Activated CD4-positive, alpha-beta memory T cell treated with anti-CD3 and anti-CD28 coated beads for 36 hours (primary cell): ENCODE measurements at regions of chr6 and their contacts with region 1.

Region 1: DNA sequence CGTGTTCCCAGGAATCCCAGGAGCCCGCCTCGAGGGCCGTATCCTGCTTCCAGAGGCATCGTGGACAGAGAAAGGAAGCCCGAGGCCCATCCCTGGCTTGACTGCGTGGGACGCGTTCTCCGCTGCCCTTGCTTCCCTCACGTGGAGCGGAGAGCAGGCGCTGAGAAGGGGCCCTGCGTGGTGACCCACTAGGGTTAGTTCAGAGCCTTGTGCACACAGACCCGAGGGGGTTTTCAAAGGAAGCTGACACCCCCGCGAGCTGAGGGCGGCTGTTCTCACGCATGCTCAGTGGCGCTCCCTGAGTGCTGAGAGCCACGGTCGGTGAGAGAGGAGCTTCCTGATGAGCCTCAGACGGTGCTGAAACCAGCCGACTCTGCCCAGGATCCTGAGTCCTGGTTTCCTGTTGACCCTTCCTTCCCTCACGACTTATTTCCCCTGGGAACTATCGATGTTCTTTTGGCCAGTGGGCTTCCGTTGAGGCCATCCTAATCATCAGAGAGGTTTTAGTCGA is 28.9 kb upstream of the CCR6 start:
- DNase-seq: peak; percentile 82
- H3K4me3 Mint-ChIP-seq: peak overlapping the region; percentile 55
- H3K27ac Mint-ChIP-seq: peak overlapping the region; percentile 67
- H3K4me1 Mint-ChIP-seq: peaks cover 67% of the 10 kb centered on the region
- H3K27me3 Mint-ChIP-seq: no peaks in the 10 kb centered on the region

Region 2: GRCh38 chr6:166929542-166930189 is 164.3 kb before region 1 on chr6:
- CTCF ChIA-PET with region 1: no interaction called
- POLR2A ChIA-PET with region 1: no interaction called
- intact Hi-C with region 1: no loop called
- DNase-seq: peak; percentile 18
- H3K4me3 Mint-ChIP-seq: no peak overlapping the region
- H3K27ac Mint-ChIP-seq: no peak overlapping the region
- H3K4me1 Mint-ChIP-seq: peaks cover 15% of the 10 kb centered on the region
- H3K27me3 Mint-ChIP-seq: no peaks in the 10 kb centered on the region

Region 3: DNA sequence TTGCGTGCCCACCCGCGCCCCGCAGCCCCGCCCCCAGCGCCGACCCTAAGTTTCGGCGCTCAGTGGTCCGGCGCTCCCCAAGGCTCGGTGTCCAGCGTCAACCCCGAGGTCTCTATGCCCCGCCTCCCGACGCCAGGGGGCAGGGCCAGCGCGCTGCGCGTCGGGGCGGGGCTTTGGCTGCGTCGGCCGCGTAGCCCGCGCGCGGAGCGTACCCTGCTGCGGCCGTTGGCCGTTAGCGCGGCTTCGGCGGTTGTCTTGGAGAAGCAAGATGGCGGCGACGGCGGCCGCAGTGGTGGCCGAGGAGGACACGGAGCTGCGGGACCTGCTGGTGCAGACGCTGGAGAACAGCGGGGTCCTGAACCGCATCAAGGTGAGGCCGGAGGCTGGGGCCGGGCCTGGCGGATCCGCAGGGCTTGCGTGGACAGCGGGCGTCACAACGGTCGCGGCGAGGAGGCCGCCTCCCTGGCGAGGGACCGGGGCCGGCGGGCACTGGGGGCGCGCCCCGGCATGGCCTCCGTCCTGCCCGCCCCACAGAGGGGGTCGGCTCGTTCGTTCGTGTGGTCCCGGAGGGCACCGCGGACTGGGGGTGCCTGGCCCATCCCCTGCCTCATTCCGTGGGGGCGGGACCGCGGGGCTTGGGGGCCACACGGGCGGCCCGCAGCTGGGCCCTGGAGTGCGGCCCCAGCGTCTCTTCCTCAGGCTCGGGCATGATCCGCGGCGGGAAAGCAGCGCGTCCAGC is 94.7 kb before region 1 on chr6 and contains the start of gene CEP43:
- CTCF ChIA-PET with region 1: interaction called, 3 read pairs
- POLR2A ChIA-PET with region 1: interaction called, 3 read pairs
- intact Hi-C with region 1: loop called (anchors 5 kb)
- DNase-seq: peak; percentile 90
- H3K4me3 Mint-ChIP-seq: peak within 1 kb of the TSS; percentile 85
- H3K27ac Mint-ChIP-seq: peak within 1 kb of the TSS; percentile 85
- H3K4me1 Mint-ChIP-seq: peaks cover 28% of the 10 kb centered on the region
- H3K27me3 Mint-ChIP-seq: no peaks in the 10 kb centered on the region
- total RNA-seq, gene CEP43: 19.5 to 21.3 TPM

Region 4: DNA sequence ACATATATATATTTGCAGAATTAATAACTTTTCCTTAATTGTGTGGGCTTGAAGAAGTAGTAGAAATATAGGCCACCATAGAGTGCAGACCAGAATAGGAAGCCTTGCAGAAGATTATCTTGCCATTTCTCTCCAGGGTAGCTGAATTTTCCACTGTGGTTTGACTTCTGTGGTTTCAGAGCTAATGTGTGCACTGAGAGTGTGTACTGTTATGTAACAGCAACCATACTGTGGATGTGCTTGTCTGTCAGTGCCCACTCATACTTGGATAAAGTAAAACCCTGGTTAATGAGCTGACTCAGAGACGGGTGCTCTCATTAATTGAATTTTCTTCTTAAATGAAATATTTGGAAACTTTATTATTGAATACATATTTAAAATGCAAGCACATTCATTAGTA is 37.6 kb before region 1 on chr6:
- CTCF ChIA-PET with region 1: interaction called, 3 read pairs
- POLR2A ChIA-PET with region 1: interaction called, 4 read pairs
- intact Hi-C with region 1: loop called (anchors 1 kb)
- DNase-seq: peak; percentile 41
- H3K4me3 Mint-ChIP-seq: peak overlapping the region; percentile 43
- H3K27ac Mint-ChIP-seq: peak overlapping the region; percentile 65
- H3K4me1 Mint-ChIP-seq: peaks cover 34% of the 10 kb centered on the region
- H3K27me3 Mint-ChIP-seq: no peaks in the 10 kb centered on the region

Region 5: GRCh38 chr6:167113935-167114910 is 20.2 kb after region 1 on chr6:
- CTCF ChIA-PET with region 1: interaction called, 5 read pairs
- POLR2A ChIA-PET with region 1: interaction called, 8 read pairs
- intact Hi-C with region 1: loop called (anchors 1 kb)
- DNase-seq: peak; percentile 90
- H3K4me3 Mint-ChIP-seq: peak overlapping the region; percentile 76
- H3K27ac Mint-ChIP-seq: peak overlapping the region; percentile 94
- H3K4me1 Mint-ChIP-seq: peaks cover 83% of the 10 kb centered on the region
- H3K27me3 Mint-ChIP-seq: no peaks in the 10 kb centered on the region

Region 6: DNA sequence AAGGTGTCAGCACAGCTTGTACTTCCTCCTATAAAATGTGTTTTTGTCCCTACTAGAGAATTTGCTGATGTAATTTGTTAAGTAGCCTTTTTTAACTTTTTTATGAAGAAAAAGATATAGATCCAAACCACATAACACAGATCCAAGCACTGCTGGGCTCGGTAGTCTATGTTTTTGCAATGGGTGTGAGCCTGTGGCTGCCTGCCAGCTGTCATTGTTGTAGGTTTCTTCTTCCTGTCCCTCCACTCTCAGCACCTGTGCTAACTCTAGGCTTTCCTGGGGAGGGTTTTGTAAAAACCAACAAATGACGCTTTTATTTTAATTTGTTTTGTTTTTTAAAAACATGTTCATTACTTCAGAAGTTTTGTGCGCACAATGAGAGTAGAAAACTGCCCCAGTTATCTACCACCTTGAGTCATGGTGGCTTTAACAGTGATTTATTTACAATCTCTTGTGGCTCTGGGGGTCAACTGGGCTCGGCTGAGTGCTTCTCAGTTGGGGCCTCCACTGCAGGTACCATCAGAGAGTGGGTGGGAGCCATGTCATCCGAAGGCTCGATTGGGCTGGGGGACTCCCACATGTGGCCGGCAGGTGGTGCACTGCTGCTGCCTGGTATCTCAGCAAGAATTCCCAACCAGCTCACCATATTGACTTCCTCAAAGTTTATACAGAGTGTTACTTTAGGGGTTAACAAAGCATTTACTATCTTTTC is 25.8 kb after region 1 on chr6:
- CTCF ChIA-PET with region 1: interaction called, 5 read pairs
- POLR2A ChIA-PET with region 1: interaction called, 8 read pairs
- intact Hi-C with region 1: loop called (anchors 1 kb)
- DNase-seq: peak; percentile 55
- H3K4me3 Mint-ChIP-seq: no peak overlapping the region
- H3K27ac Mint-ChIP-seq: peak overlapping the region; percentile 72
- H3K4me1 Mint-ChIP-seq: peaks cover 87% of the 10 kb centered on the region
- H3K27me3 Mint-ChIP-seq: no peaks in the 10 kb centered on the region